OCI-LY7 (cell line): ENCODE measurements at regions of chr12 and their contacts with region 1.

Region 1: DNA sequence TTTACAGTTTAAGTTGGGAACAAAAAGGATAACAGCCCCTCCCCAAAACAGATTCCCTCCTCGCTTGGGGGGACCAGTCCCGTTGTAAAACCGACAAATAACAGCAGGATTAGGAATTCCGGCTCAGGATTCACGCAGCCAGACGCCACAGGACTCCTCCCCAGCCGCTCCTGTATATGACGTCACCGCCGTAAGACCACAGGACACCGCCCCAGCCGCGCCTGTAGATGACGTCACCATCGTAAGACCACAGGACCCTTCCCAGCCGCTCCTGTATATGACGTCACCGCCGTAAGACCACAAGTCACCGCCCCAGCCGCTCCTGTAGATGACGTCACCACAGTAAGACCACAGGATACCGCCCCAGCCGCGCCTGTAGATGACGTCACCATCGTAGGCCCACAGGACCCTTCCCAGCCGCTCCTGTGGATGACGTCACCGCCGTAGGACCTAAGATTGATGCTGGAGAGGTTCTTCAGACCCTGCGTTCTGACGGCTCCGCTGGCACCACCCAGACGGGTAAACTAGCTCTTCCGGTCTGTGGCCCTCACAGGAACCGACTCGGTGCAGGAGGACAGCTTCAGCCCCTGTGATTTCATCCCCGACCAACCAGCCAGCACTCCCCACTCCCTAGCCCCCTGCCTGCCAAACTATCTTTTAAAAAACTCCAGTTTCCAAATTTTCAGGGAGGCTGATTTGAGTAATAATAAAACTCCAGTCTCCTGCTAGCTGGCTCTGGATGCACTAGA is 43.9 kb upstream of the FBRSL1 start:
- DNase-seq: peak; percentile 93
- H3K4me3 ChIP-seq: peak overlapping the region; percentile 78
- H3K27ac ChIP-seq: peak overlapping the region; percentile 84
- H3K4me1 ChIP-seq: peaks cover 18% of the 10 kb centered on the region
- CTCF ChIP-seq: no peak

Region 2: GRCh38 chr12:132489602-132490239 is 43.7 kb after region 1 on chr12 and contains the start of gene FBRSL1:
- CTCF ChIA-PET with region 1: no interaction called
- POLR2A ChIA-PET with region 1: no interaction called
- intact Hi-C with region 1: loop called (anchors 2 kb)
- DNase-seq: peak; percentile 92
- H3K4me3 ChIP-seq: peak within 1 kb of the TSS; percentile 78
- H3K27ac ChIP-seq: no peak within 1 kb of the TSS
- H3K4me1 ChIP-seq: peaks cover 28% of the 10 kb centered on the region
- CTCF ChIP-seq: no peak
- total RNA-seq, gene FBRSL1: 8.0 and 24.6 TPM in 2 replicates

Region 3: GRCh38 chr12:132632501-132633228 is 186.6 kb after region 1 on chr12:
- CTCF ChIA-PET with region 1: no interaction called
- POLR2A ChIA-PET with region 1: no interaction called
- intact Hi-C with region 1: loop called (anchors 1 kb)
- DNase-seq: peak; percentile 89
- H3K4me3 ChIP-seq: peak overlapping the region; percentile 20
- H3K27ac ChIP-seq: peak overlapping the region; percentile 100
- H3K4me1 ChIP-seq: peaks cover 62% of the 10 kb centered on the region
- CTCF ChIP-seq: no peak